Mammary epithelial cell (primary cell): ENCODE measurements at regions of chr12 and their contacts with region 1.

Region 1: DNA sequence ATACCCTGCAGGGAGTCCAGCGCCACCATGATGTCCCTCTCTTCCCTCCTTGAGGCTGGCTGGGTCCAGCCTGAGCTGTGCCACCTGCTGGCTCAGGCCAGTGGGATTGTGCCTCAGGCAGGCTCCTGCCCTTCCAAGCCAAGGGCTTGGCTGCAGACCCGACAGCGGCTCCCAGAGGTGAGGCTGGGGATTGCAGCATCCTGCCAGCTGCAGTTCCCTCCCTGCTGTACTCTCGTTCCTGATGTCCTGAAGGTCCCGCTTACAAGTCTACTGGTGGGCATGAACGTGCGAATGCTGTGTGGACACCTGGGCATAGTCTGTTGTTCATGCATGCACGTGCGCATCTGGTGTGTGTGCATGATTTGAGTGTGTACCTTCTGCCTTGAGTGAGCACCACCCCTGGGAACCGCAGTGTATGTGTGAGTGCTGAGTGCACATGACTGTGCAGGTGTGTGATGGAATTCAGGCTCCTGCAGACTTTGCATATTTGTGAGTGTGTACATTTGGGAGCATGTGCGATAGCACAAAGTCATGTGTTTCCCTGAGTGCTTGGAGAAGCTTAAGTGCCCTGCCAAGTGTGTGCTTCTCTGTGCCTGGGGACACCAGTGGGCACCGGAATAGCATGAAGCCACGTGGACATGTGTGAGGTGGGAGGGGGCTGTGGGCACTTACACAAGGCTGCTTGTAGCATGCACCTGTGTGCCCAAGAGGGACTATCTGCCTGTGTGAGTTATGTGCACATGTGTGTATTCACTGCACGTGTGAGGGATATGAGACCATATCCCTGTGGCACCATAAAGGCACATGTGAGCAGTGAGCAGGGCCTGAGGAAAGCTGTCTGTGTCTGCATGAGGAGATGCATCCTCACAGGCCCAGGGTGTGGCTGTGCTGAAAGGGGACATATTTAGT is 19.3 kb upstream of the KRT7 start:
- DNase-seq: peak; percentile 79
- H3K4me3 ChIP-seq: no peak overlapping the region
- H3K27ac ChIP-seq: no peak overlapping the region
- H3K4me1 ChIP-seq: peaks cover 73% of the 10 kb centered on the region
- H3K27me3 ChIP-seq: no peaks in the 10 kb centered on the region
- CTCF ChIP-seq: peak; percentile 98 to 100

Region 2: DNA sequence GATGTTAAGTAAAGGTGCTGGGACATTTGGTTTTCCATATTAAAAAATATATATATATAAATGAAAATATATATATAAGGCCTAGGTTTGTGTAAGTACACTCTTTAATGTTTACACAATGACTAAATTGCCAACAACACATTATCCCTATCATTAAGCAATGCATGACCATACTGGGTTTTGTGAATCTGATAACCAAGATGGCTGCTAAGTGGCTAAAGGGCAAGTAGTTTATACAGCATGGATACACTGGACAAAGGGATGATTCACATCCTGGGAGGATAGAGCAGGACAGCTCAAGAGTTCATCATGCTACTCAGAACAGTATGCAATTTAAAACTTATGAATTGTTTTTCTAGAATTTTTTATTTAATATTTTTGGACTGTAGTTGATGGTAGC is 454.6 kb before region 1 on chr12:
- CTCF ChIA-PET with region 1: no interaction called
- dilution Hi-C with region 1: no loop called
- in situ Hi-C with region 1: no loop called
- intact Hi-C with region 1: no loop called
- DNase-seq: peak; percentile 24
- H3K4me3 ChIP-seq: no peak overlapping the region
- H3K27ac ChIP-seq: no peak overlapping the region
- H3K4me1 ChIP-seq: peaks cover 3% of the 10 kb centered on the region
- H3K27me3 ChIP-seq: no peaks in the 10 kb centered on the region
- CTCF ChIP-seq: no peak

Region 3: GRCh38 chr12:52156736-52157565 is 56.8 kb before region 1 on chr12:
- CTCF ChIA-PET with region 1: no interaction called
- dilution Hi-C with region 1: no loop called
- in situ Hi-C with region 1: no loop called
- intact Hi-C with region 1: loop called (anchors 2 kb)
- DNase-seq: peak; percentile 80
- H3K4me3 ChIP-seq: no peak overlapping the region
- H3K27ac ChIP-seq: peak overlapping the region; percentile 96
- H3K4me1 ChIP-seq: peaks cover 46% of the 10 kb centered on the region
- H3K27me3 ChIP-seq: no peaks in the 10 kb centered on the region
- CTCF ChIP-seq: peak; percentile 90 to 98

Region 4: GRCh38 chr12:52230327-52231291 is 16.8 kb after region 1 on chr12:
- CTCF ChIA-PET with region 1: interaction called, 3 read pairs
- dilution Hi-C with region 1: no loop called
- in situ Hi-C with region 1: no loop called
- intact Hi-C with region 1: loop called (anchors 2 kb)
- DNase-seq: peak; percentile 75
- H3K4me3 ChIP-seq: peak overlapping the region in 1 of 3 experiments; percentile 5
- H3K27ac ChIP-seq: peak overlapping the region; percentile 79
- H3K4me1 ChIP-seq: peaks cover 57% of the 10 kb centered on the region
- H3K27me3 ChIP-seq: no peaks in the 10 kb centered on the region
- CTCF ChIP-seq: no peak

Region 5: GRCh38 chr12:52278541-52279421 is 65.0 kb after region 1 on chr12:
- CTCF ChIA-PET with region 1: interaction called, 4 read pairs
- dilution Hi-C with region 1: loop called (anchors 5 kb)
- in situ Hi-C with region 1: no loop called
- intact Hi-C with region 1: loop called (anchors 1 kb)
- DNase-seq: peak; percentile 73
- H3K4me3 ChIP-seq: peak overlapping the region in 1 of 3 experiments; percentile 20
- H3K27ac ChIP-seq: peak overlapping the region; percentile 100
- H3K4me1 ChIP-seq: peaks cover 45% of the 10 kb centered on the region
- H3K27me3 ChIP-seq: no peaks in the 10 kb centered on the region
- CTCF ChIP-seq: peak; percentile 76 to 100

Region 6: DNA sequence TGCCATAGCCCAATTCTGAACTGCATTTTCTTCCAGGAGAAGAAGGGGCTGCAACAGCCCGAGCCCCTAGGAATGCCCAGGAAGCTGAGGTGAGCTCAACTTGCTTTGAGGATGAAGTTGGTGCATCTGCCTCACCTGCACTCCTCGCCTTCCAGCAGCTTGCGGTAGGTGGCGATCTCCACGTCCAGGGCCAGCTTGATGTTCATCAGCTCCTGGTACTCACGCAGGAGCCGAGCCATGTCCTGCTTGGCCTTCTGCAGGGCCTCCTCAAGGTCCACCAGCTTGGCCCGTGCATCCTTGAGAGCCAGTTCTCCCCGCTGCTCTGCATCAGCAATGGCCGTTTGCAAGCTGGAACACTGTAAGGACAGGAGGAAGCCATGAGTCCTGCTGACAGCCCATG is 214.4 kb after region 1 on chr12:
- CTCF ChIA-PET with region 1: no interaction called
- dilution Hi-C with region 1: loop called (anchors 5 kb)
- in situ Hi-C with region 1: no loop called
- intact Hi-C with region 1: no loop called
- DNase-seq: no peak
- H3K4me3 ChIP-seq: no peak overlapping the region
- H3K27ac ChIP-seq: no peak overlapping the region
- H3K4me1 ChIP-seq: peaks cover 25% of the 10 kb centered on the region
- H3K27me3 ChIP-seq: no peaks in the 10 kb centered on the region
- CTCF ChIP-seq: no peak